ENCODE measurements at regions of chr2 and their contacts with region 1.

Region 1: DNA sequence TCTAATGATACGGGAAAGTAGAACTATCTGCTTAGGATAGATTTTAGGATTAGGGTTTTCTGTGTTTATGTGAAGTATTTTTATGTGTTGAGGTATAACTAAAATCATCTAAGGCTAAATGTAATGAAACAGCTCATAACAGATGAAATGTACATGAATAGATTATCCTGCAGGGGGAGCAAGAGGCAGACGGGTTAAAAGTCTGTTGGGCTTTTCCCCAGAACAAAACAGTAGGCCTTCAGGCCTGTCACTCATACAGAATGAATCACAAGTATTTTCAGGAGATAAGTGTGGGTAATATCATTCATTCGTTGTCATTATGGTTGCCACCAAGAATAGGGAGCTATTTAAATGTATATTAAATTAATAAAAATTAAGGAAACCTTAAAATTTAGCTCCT is 107.9 kb upstream of the IL1R2 start:
- DNase-seq: no peak

Region 2: DNA sequence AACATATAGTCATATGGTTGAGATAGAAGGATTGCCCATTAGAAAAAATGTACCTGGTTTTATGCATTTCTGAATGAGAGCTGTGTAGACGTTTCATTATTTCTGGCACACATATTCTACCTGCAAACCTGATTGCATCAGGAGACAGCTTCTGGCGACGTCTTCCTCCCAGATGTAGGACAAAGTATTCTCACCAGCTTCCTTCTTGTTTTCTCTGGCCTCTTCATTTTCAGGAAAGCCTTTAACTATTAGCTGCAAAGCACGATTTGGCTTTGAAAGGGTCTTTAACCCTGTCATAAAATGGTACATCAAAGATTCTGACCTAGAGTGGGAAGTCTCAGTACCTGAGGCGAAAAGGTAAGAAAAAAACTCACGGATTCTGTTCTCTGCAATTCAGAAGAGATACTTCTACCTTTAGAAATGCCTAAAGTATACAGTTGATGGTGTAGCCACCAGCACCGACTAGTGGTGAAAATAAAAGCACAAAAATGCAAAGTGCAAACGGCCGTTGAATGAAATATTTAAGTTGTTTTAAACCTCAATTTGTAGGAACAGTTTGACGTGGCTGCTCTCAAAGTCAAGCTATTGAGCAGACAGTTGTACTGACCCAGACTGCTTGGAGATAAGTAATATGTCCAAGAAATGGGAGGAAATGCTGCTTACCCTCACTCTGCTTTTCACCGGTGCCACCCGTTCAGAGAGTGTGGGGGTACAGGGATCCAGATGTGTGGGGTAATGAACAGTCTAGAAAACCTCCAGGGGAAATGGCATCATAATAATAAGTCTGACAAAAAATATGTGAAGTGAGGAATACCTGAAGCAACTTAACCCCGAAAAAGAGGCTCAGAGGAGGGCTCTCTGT is 559.3 kb after region 1 on chr2:
- intact Hi-C with region 1: loop called (anchors 5 kb)
- DNase-seq: peak in 2 of 10 donors; percentile 15 to 20